Calu3 (cell line): ENCODE measurements at regions of chr10 and their contacts with region 1.

Region 1: DNA sequence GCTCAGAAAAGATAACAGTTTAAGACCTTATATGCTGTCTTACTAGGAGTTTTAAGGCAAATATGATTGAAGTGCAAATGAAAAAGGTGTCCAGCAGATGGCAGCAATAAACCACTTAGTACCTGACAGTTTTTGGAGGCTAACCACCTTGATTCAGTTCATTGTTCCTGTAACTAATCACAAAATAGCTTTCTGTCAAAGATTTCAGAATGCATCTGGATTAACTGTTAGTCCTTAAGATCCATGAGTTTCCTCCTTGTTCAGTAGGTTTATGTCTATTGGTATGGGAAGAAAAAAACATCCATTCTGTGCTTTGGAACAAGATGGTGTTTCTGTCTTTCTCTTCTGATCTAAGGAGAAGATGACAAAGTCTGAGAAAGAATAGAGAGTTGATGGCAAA is 46.6 kb downstream of the CCSER2 start:
- DNase-seq: peak; percentile 40
- H3K4me3 Mint-ChIP-seq: no peak overlapping the region
- H3K27ac Mint-ChIP-seq: no peak overlapping the region
- H3K4me1 Mint-ChIP-seq: no peaks in the 10 kb centered on the region
- H3K27me3 Mint-ChIP-seq: no peaks in the 10 kb centered on the region
- CTCF ChIP-seq: no peak

Region 2: GRCh38 chr10:84429926-84430520 is 55.0 kb after region 1 on chr10:
- CTCF ChIA-PET with region 1: no interaction called
- intact Hi-C with region 1: loop called (anchors 5 kb)
- DNase-seq: peak; percentile 76
- H3K4me3 Mint-ChIP-seq: no peak overlapping the region
- H3K27ac Mint-ChIP-seq: no peak overlapping the region
- H3K4me1 Mint-ChIP-seq: peaks cover 22% of the 10 kb centered on the region
- H3K27me3 Mint-ChIP-seq: no peaks in the 10 kb centered on the region
- CTCF ChIP-seq: peak; percentile 57

Region 3: GRCh38 chr10:84537447-84537931 is 162.5 kb after region 1 on chr10:
- CTCF ChIA-PET with region 1: interaction called, 7 read pairs
- intact Hi-C with region 1: loop called (anchors 1 kb)
- DNase-seq: peak; percentile 37
- H3K4me3 Mint-ChIP-seq: no peak overlapping the region
- H3K27ac Mint-ChIP-seq: no peak overlapping the region
- H3K4me1 Mint-ChIP-seq: no peaks in the 10 kb centered on the region
- H3K27me3 Mint-ChIP-seq: no peaks in the 10 kb centered on the region
- CTCF ChIP-seq: peak; percentile 52